MCF 10A (cell line): ENCODE measurements at regions of chr1 and their contacts with region 1.

Region 1: GRCh38 chr1:236489710-236490377 is 33.9 kb upstream of the LGALS8 start:
- DNase-seq: peak; percentile 85
- H3K4me3 Mint-ChIP-seq: no peak overlapping the region
- H3K27ac Mint-ChIP-seq: no peak overlapping the region
- H3K4me1 Mint-ChIP-seq: no peaks in the 10 kb centered on the region
- H3K27me3 Mint-ChIP-seq: peaks cover 7% of the 10 kb centered on the region
- CTCF ChIP-seq: peak; percentile 86

Region 2: DNA sequence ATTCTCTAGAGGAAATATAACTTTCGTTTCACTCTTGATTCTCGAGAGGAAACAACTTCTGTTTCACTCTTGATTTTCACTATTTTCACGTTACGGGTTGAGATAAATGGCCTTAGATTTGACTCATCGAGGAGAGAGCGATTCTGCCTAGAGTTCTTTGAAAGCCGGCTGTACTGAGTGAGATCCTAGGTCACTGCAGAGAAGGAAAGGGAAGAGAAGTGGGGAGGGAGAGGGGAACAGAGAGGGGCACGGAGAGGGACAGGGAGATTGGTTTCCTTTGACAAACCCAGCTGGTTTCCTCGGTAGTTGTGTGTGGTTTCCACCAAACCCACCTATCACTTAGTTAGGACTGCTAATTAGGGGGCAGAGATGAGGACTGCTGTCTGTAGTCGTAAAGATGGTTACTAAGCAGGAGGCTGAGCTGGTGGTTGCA is 369.1 kb before region 1 on chr1:
- CTCF ChIA-PET with region 1: interaction called, 10 read pairs
- POLR2A ChIA-PET with region 1: no interaction called
- intact Hi-C with region 1: no loop called
- DNase-seq: no peak
- H3K4me3 Mint-ChIP-seq: no peak overlapping the region
- H3K27ac Mint-ChIP-seq: no peak overlapping the region
- H3K4me1 Mint-ChIP-seq: no peaks in the 10 kb centered on the region
- H3K27me3 Mint-ChIP-seq: no peaks in the 10 kb centered on the region
- CTCF ChIP-seq: no peak

Region 3: GRCh38 chr1:236281654-236282424 is 208.0 kb before region 1 on chr1 and contains the start of gene ERO1B:
- CTCF ChIA-PET with region 1: interaction called, 4 read pairs
- POLR2A ChIA-PET with region 1: no interaction called
- intact Hi-C with region 1: loop called (anchors 5 kb)
- DNase-seq: peak; percentile 100
- H3K4me3 Mint-ChIP-seq: peak within 1 kb of the TSS; percentile 80
- H3K27ac Mint-ChIP-seq: peak within 1 kb of the TSS; percentile 24
- H3K4me1 Mint-ChIP-seq: peaks cover 23% of the 10 kb centered on the region
- H3K27me3 Mint-ChIP-seq: peaks cover 26% of the 10 kb centered on the region
- CTCF ChIP-seq: no peak
- total RNA-seq, gene ERO1B: 9.6 and 17.2 TPM in 2 replicates

Region 4: GRCh38 chr1:236354330-236355147 is 135.3 kb before region 1 on chr1:
- CTCF ChIA-PET with region 1: no interaction called
- POLR2A ChIA-PET with region 1: no interaction called
- intact Hi-C with region 1: no loop called
- DNase-seq: peak; percentile 56
- H3K4me3 Mint-ChIP-seq: no peak overlapping the region
- H3K27ac Mint-ChIP-seq: no peak overlapping the region
- H3K4me1 Mint-ChIP-seq: peaks cover 7% of the 10 kb centered on the region
- H3K27me3 Mint-ChIP-seq: no peaks in the 10 kb centered on the region
- CTCF ChIP-seq: no peak

Region 5: DNA sequence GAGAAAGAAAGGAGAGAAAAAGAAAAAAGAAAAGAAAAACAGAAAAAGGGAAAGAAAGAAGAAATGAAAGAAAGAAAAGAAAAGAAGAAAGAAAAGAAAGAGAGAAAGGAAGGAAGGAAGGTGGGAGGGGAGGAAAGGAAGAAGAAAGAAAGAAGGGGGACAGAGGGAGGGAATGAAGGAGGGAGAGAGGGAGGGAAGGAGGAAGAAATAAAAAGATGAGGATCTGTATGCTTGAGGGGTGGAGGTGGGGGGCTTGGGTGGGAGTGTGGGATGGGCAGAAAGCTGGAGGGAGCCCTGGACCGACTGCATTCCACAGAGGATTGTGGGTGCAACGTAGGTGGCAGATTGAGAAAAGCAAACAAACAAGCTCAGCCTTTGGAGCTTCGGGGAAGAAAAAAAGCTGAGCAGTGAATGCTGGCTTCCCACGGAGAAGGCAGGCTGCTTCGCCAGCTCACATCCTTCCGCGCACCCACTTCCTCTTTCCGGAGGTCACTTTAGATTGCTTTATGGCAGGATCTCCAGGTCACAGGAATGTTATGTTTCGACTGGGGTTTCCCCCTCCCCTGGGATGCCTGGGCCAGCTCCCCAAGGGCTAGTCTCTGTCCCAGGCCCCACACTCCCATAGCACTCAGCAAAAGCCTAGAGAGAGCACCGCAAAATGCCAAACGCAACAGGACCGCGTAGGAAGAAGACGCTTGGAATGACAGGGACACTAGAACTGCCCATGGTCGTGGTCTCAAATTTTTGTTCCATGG is 13.2 kb after region 1 on chr1:
- CTCF ChIA-PET with region 1: interaction called, 15 read pairs
- POLR2A ChIA-PET with region 1: interaction called, 3 read pairs
- intact Hi-C with region 1: no loop called
- DNase-seq: peak; percentile 70
- H3K4me3 Mint-ChIP-seq: peak overlapping the region; percentile 12
- H3K27ac Mint-ChIP-seq: peak overlapping the region; percentile 47
- H3K4me1 Mint-ChIP-seq: peaks cover 16% of the 10 kb centered on the region
- H3K27me3 Mint-ChIP-seq: no peaks in the 10 kb centered on the region
- CTCF ChIP-seq: no peak

Region 6: DNA sequence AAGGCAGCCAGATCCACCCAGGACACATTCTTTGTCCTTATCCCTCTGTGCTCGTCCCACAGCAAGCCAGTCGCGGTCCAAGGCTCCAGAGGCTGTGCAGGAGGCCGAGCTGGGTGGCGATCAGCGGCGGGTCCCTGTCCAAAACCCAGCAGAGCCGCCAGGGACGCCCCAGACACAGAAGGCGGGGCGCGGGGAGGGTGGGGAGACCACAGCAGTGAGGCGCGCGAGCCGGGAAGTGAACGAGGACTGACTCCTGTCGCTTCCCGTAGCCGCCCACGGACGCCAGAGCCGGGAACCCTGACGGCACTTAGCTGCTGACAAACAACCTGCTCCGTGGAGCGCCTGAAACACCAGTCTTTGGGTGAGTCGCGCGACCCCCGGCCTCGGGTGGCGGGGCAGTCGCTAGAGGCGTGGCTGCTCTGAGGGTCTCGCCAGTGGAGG is 33.9 kb after region 1 on chr1 and contains the start of gene LGALS8:
- CTCF ChIA-PET with region 1: interaction called, 12 read pairs
- POLR2A ChIA-PET with region 1: interaction called, 3 read pairs
- intact Hi-C with region 1: no loop called
- DNase-seq: peak; percentile 92
- H3K4me3 Mint-ChIP-seq: peak within 1 kb of the TSS; percentile 98
- H3K27ac Mint-ChIP-seq: peak within 1 kb of the TSS; percentile 97
- H3K4me1 Mint-ChIP-seq: peaks cover 6% of the 10 kb centered on the region
- H3K27me3 Mint-ChIP-seq: no peaks in the 10 kb centered on the region
- CTCF ChIP-seq: no peak
- total RNA-seq, gene LGALS8: 73.2 and 99.7 TPM in 2 replicates

Region 7: GRCh38 chr1:236534151-236534651 is 44.4 kb after region 1 on chr1:
- CTCF ChIA-PET with region 1: interaction called, 20 read pairs
- POLR2A ChIA-PET with region 1: no interaction called
- intact Hi-C with region 1: loop called (anchors 5 kb)
- DNase-seq: peak; percentile 22
- H3K4me3 Mint-ChIP-seq: no peak overlapping the region
- H3K27ac Mint-ChIP-seq: peak overlapping the region; percentile 9
- H3K4me1 Mint-ChIP-seq: peaks cover 34% of the 10 kb centered on the region
- H3K27me3 Mint-ChIP-seq: no peaks in the 10 kb centered on the region
- CTCF ChIP-seq: no peak